K562 (cell line): ENCODE measurements at regions of chr1 and their contacts with region 1.

Region 1: DNA sequence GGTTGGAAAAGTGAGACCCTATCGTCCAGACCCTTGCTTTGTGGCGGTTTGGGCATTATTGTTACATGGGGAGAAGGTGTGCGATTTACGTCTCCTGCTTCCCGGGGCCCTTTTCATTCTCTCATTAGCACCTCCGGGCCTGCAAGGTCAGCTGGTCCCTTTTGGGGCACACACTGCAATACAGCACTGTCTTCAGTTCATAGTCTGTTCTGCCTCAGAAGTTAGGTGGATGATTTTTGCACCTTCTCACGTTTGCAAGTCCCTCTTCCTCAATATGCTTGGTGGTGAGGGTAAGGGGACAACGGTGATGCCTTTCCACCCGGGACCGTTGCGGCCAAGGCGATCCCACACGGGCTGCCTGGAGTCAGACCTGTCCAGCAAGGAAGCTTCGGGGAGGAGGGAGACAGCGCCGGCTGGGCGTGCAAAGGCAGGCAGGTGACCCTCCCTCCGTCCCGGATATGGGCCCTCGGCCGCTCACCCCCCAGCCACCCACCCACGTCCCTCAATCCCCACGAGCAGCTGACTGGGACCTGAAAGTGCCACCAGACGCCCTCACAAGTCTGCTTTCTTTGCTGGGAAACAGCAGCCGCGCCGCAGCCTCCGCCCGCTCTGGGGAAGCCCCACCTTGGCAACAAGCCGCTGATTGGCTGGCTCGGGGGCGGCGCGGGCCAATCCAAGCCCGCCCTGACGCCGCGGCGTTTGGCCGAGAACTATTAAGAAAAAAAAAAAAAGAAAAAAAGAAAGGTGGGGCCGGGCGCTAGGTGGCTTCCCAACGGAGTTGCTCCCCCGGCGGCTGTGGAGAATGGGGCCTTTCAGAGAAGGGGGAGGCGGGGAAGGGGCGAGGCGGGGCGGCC is 21.7 kb downstream of the BTG2 start:
- DNase-seq: peak; percentile 96 to 99 (median 99)
- ATAC-seq: peak; percentile 98
- H3K4me3 ChIP-seq: peak overlapping the region; percentile 41
- H3K27ac ChIP-seq: peak overlapping the region; percentile 14; the same call in 2 of the 3 replicates
- H3K4me1 ChIP-seq: peaks cover 25 to 31% of the 10 kb centered on the region in 2 experiments; a peak in 4 of 5 replicates
- H3K27me3 ChIP-seq: peaks cover 10 to 27% of the 10 kb centered on the region in 2 experiments; a peak in 4 of 5 replicates
- CTCF ChIP-seq: 0 out of 6 replicates have a peak, but pooled peaks of 1 of the 3 experiments have one; percentile 38
- EP300 ChIP-seq: no peak
- POLR2A ChIP-seq: peak; percentile 43; the same call in 1 of the 2 replicates
- RAD21 ChIP-seq: no peak

Region 2: DNA sequence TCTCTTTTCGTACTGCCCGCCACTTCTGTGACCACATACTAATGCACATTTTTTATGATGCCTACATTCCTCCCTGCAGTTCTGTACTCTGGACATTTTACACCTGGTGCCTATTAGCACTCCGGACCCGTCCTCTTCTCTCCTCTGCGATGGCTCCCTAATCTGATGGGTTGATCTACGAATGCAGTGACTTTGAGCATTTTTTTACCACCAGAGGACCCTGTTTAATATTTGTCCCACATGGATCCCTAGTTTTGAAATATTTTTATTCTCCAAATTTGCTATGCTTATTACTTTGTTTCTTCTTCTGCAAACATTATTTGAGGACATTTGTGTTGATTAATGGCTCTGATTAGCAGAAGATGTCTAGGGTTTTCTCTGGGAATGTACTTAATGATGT is 295.6 kb before region 1 on chr1:
- CTCF ChIA-PET with region 1: no interaction called
- POLR2A ChIA-PET with region 1: no interaction called
- in situ Hi-C with region 1: loop called (anchors 5 kb)
- intact Hi-C with region 1: loop called (anchors 10 kb)
- DNase-seq: peak; percentile 55 to 67 (median 61)
- ATAC-seq: peak; percentile 52
- H3K4me3 ChIP-seq: no peak overlapping the region
- H3K27ac ChIP-seq: no peak overlapping the region
- H3K4me1 ChIP-seq: peaks cover 6 to 23% of the 10 kb centered on the region in 2 experiments; a peak in 4 of 5 replicates
- H3K27me3 ChIP-seq: peaks cover 14 to 15% of the 10 kb centered on the region in 2 experiments; a peak in 3 of 5 replicates
- CTCF ChIP-seq: peak; percentile 73 to 91 (median 89)
- EP300 ChIP-seq: no peak; the same call in 1 of the 2 replicates
- POLR2A ChIP-seq: no peak
- RAD21 ChIP-seq: peak in 1 of 2 experiments; percentile 62; a peak in 2 of 4 replicates

Region 3: GRCh38 chr1:203304919-203305808 is 21.9 kb before region 1 on chr1 and contains the start of gene BTG2:
- CTCF ChIA-PET with region 1: no interaction called
- POLR2A ChIA-PET with region 1: interaction called, 117 read pairs
- in situ Hi-C with region 1: no loop called
- intact Hi-C with region 1: loop called (anchors 1 kb)
- DNase-seq: peak; percentile 96 to 99 (median 98)
- ATAC-seq: peak; percentile 86
- H3K4me3 ChIP-seq: peak within 1 kb of the TSS; percentile 69
- H3K27ac ChIP-seq: peak within 1 kb of the TSS; percentile 90
- H3K4me1 ChIP-seq: peaks cover 65 to 67% of the 10 kb centered on the region in 2 experiments
- H3K27me3 ChIP-seq: no peaks in the 10 kb centered on the region
- CTCF ChIP-seq: no peak
- EP300 ChIP-seq: 0 out of 2 replicates have a peak, but pooled peaks have one; percentile 1
- POLR2A ChIP-seq: peak; percentile 95
- RAD21 ChIP-seq: peak in 1 of 2 experiments; percentile 3; a peak in 1 of 4 replicates
- polyA plus RNA-seq, gene BTG2: 2.3 to 3.8 TPM

Region 4: GRCh38 chr1:203316626-203317093 is 10.4 kb before region 1 on chr1:
- CTCF ChIA-PET with region 1: no interaction called
- POLR2A ChIA-PET with region 1: interaction called, 117 read pairs
- in situ Hi-C with region 1: no loop called
- intact Hi-C with region 1: no loop called
- DNase-seq: peak in 2 of 4 experiments; percentile 57 to 67
- ATAC-seq: peak; percentile 31
- H3K4me3 ChIP-seq: no peak overlapping the region
- H3K27ac ChIP-seq: no peak overlapping the region
- H3K4me1 ChIP-seq: peaks cover 32 to 41% of the 10 kb centered on the region in 2 experiments
- H3K27me3 ChIP-seq: no peaks in the 10 kb centered on the region
- CTCF ChIP-seq: no peak
- EP300 ChIP-seq: no peak
- POLR2A ChIP-seq: no peak
- RAD21 ChIP-seq: no peak